Activated naive CD4-positive, alpha-beta T cell treated with anti-CD3 and anti-CD28 coated beads for 36 hours (primary cell): ENCODE measurements at regions of chr3 and their contacts with region 1.

Region 1: GRCh38 chr3:111338059-111338698 is 203.8 kb upstream of the CD96 start:
- DNase-seq: peak; percentile 70
- H3K4me3 Mint-ChIP-seq: no peak overlapping the region
- H3K27ac Mint-ChIP-seq: no peak overlapping the region
- H3K4me1 Mint-ChIP-seq: peaks cover 15% of the 10 kb centered on the region
- H3K27me3 Mint-ChIP-seq: peaks cover 3% of the 10 kb centered on the region

Region 2: DNA sequence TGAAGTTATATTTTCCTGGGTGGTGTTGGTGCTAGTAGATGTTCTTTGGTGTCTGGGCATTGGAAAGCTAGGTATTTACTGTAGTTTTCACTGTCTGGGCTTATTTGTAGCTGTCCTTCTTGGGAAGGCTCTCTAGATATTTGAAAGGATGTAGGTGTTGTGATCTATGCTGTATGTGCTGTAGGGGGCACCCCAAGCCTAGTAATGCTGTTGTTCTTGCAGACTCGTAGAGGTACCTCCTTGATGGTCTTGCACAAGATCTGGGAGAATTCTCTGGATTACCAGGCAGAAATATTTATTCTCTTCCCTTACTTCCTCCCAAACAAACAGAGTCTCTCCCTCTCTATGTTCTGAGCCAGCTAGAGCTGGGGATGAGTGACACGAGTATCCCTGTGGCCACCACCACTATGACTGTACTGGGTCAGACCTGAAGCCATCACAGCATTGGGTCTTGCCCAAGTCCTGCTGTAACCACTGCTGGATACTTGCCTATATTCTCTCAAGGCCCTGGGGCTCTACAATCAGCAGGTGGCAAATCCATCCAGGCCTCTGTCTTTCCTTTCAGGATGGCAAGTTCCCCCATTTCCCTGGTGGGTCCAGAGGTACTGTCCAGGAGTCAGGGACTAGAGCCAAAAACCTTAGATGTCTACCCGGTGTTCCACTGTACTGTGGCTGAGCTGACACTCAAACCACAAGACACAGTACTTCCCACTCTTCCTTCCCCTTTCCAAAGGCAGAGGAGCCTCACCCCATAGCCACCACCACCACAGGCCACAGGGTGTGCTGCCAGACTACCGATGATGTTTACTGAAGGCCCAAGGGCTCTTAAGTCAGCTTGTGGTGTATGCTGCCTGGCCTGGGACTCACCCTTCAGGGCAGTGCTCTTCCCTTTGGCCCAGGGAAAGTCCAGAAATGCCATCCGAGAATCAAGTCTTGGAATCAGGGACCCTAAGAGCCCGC is 1805.6 kb before region 1 on chr3:
- CTCF ChIA-PET with region 1: interaction called, 3 read pairs
- intact Hi-C with region 1: loop called (anchors 5 kb)
- DNase-seq: peak; percentile 67
- H3K4me3 Mint-ChIP-seq: no peak overlapping the region
- H3K27ac Mint-ChIP-seq: no peak overlapping the region
- H3K4me1 Mint-ChIP-seq: no peaks in the 10 kb centered on the region
- H3K27me3 Mint-ChIP-seq: peaks cover 5% of the 10 kb centered on the region

Region 3: GRCh38 chr3:111012388-111013248 is 325.6 kb before region 1 on chr3:
- CTCF ChIA-PET with region 1: interaction called, 3 read pairs
- intact Hi-C with region 1: loop called (anchors 5 kb)
- DNase-seq: peak; percentile 27
- H3K4me3 Mint-ChIP-seq: no peak overlapping the region
- H3K27ac Mint-ChIP-seq: no peak overlapping the region
- H3K4me1 Mint-ChIP-seq: no peaks in the 10 kb centered on the region
- H3K27me3 Mint-ChIP-seq: peaks cover 2% of the 10 kb centered on the region

Region 4: DNA sequence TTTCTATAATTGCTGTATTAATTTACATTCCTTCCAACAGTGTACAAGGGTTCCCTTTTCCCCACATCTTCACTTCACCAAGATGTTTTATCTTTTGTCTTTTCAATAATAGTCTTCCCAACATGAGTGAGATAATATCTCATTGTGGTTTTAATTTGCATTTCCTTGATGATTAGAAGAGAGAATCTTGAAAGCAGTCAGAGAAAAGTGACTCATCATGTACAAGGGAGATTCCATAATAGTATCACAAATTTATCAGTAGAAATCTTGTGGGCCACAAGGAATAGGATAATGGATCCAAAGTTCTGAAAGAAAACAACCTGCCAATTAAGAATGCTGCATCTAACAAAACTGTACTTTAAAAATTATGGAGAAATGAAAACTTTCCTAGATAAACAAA is 77.3 kb before region 1 on chr3:
- CTCF ChIA-PET with region 1: no interaction called
- intact Hi-C with region 1: loop called (anchors 2 kb)
- DNase-seq: no peak
- H3K4me3 Mint-ChIP-seq: no peak overlapping the region
- H3K27ac Mint-ChIP-seq: no peak overlapping the region
- H3K4me1 Mint-ChIP-seq: peaks cover 13% of the 10 kb centered on the region
- H3K27me3 Mint-ChIP-seq: peaks cover 2% of the 10 kb centered on the region

Region 5: DNA sequence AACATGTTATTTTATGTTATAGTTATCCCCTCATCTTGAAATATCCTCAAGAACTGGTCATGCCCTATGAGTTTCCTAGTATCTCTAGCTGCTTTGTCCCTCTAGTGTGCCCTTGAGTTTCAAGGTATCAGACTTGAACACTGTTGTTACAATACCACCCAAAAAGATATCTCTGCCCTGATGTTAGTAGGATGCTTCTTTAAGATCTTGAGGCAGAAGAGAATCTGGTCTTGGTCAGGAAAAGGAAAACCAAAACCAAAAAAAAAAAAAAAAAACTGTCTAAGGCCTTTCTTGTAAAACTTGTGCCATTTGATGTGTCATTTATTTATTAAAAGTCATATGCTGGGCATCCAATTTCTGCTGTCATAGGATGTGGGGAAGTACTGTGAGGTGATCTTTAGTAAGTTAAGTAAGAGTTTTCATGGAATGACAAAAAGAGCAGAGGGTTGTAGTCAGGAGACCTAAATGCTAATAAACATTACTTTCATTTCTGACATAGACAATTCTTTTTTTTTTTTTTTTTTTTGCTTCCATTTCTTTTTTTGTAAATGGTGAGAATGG is 36.9 kb before region 1 on chr3:
- CTCF ChIA-PET with region 1: no interaction called
- intact Hi-C with region 1: no loop called
- DNase-seq: no peak
- H3K4me3 Mint-ChIP-seq: no peak overlapping the region
- H3K27ac Mint-ChIP-seq: no peak overlapping the region
- H3K4me1 Mint-ChIP-seq: peaks cover 12% of the 10 kb centered on the region
- H3K27me3 Mint-ChIP-seq: no peaks in the 10 kb centered on the region

Region 6: GRCh38 chr3:111311709-111312235 is 26.4 kb before region 1 on chr3:
- CTCF ChIA-PET with region 1: no interaction called
- intact Hi-C with region 1: loop called (anchors 1 kb)
- DNase-seq: no peak
- H3K4me3 Mint-ChIP-seq: no peak overlapping the region
- H3K27ac Mint-ChIP-seq: peak overlapping the region; percentile 37
- H3K4me1 Mint-ChIP-seq: peaks cover 33% of the 10 kb centered on the region
- H3K27me3 Mint-ChIP-seq: no peaks in the 10 kb centered on the region